Activated naive CD4-positive, alpha-beta T cell treated with anti-CD3 and anti-CD28 coated beads for 36 hours (primary cell): ENCODE measurements at regions of chr4 and their contacts with region 1.

Region 1: DNA sequence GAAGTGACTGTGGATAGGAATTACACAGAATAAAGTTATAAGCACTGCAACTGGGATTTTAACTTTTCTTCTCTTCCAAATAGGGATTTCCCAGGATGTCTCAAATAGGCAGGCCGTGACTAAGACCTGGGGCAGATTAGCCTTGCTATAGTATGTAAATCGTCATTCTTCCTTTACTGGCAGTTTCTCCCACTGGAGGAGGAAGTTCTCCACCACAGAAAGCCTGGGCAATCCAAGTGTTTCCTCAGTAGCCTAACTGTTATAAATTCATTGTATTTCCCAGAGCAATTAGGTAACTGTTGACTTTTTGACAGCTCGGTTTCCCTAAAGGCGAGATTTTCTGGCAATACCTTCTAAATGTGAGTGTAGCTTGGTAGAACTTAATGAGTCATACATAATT is at the start of gene TNIP3:
- DNase-seq: no peak
- H3K4me3 Mint-ChIP-seq: no peak within 1 kb of the TSS
- H3K27ac Mint-ChIP-seq: no peak within 1 kb of the TSS
- H3K4me1 Mint-ChIP-seq: peaks cover 37% of the 10 kb centered on the region
- H3K27me3 Mint-ChIP-seq: no peaks in the 10 kb centered on the region
- total RNA-seq, gene TNIP3: 1.8 to 2.7 TPM

Region 2: GRCh38 chr4:119921830-119922229 is 1242.5 kb before region 1 on chr4:
- CTCF ChIA-PET with region 1: no interaction called
- intact Hi-C with region 1: no loop called
- DNase-seq: no peak
- H3K4me3 Mint-ChIP-seq: no peak overlapping the region
- H3K27ac Mint-ChIP-seq: no peak overlapping the region
- H3K4me1 Mint-ChIP-seq: no peaks in the 10 kb centered on the region
- H3K27me3 Mint-ChIP-seq: no peaks in the 10 kb centered on the region

Region 3: DNA sequence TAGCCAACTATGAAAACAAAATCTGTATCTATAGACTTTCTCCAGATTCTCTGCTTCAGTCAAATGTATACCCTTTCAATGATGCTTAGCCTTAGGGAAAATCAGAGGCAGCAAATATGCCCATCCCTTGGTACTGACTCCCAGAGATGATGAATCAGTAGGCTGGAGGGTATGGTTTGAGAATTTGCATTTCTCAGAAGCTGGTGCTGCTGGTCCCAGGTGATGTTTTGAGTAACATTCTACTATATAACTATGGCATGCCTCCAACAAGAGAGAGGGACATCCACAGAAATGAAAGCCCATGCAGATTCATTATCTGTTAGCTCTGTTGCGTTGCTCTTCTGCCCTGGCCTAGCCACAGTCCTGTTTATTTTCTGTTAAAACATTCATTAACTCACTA is 13.8 kb before region 1 on chr4:
- CTCF ChIA-PET with region 1: no interaction called
- intact Hi-C with region 1: loop called (anchors 1 kb)
- DNase-seq: peak; percentile 45
- H3K4me3 Mint-ChIP-seq: no peak overlapping the region
- H3K27ac Mint-ChIP-seq: no peak overlapping the region
- H3K4me1 Mint-ChIP-seq: peaks cover 62% of the 10 kb centered on the region
- H3K27me3 Mint-ChIP-seq: no peaks in the 10 kb centered on the region

Region 4: GRCh38 chr4:121176082-121176934 is 12.0 kb after region 1 on chr4:
- CTCF ChIA-PET with region 1: interaction called, 4 read pairs
- intact Hi-C with region 1: loop called (anchors 1 kb)
- DNase-seq: no peak
- H3K4me3 Mint-ChIP-seq: no peak overlapping the region
- H3K27ac Mint-ChIP-seq: peak overlapping the region; percentile 34
- H3K4me1 Mint-ChIP-seq: peaks cover 74% of the 10 kb centered on the region
- H3K27me3 Mint-ChIP-seq: no peaks in the 10 kb centered on the region

Region 5: GRCh38 chr4:121182296-121182695 is 18.0 kb after region 1 on chr4:
- CTCF ChIA-PET with region 1: interaction called, 4 read pairs
- intact Hi-C with region 1: loop called (anchors 2 kb)
- DNase-seq: peak; percentile 30
- H3K4me3 Mint-ChIP-seq: peak overlapping the region; percentile 71
- H3K27ac Mint-ChIP-seq: peak overlapping the region; percentile 91
- H3K4me1 Mint-ChIP-seq: peaks cover 60% of the 10 kb centered on the region
- H3K27me3 Mint-ChIP-seq: no peaks in the 10 kb centered on the region

Region 6: GRCh38 chr4:121266974-121267373 is 102.7 kb after region 1 on chr4:
- CTCF ChIA-PET with region 1: no interaction called
- intact Hi-C with region 1: no loop called
- DNase-seq: no peak
- H3K4me3 Mint-ChIP-seq: no peak overlapping the region
- H3K27ac Mint-ChIP-seq: no peak overlapping the region
- H3K4me1 Mint-ChIP-seq: peaks cover 2% of the 10 kb centered on the region
- H3K27me3 Mint-ChIP-seq: no peaks in the 10 kb centered on the region